Activated T-helper 2 cell treated with anti-CD3 and anti-CD28 coated beads, Interferon-gamma antibody, Interleukin-2, Interleukin-4, amounts not matched to agents 10 μg/mL and 5 μg/mL and 100 μg/mL, durations not matched to agents 14 hours and 24 hours and 36 hours (primary cell): ENCODE measurements at regions of chr20 and their contacts with region 1.

Region 1: GRCh38 chr20:407133-407952 is 756 bp upstream of the RBCK1 start:
- DNase-seq: peak; percentile 66
- H3K4me3 Mint-ChIP-seq: peak overlapping the region; percentile 86
- H3K27ac Mint-ChIP-seq: peak overlapping the region; percentile 89
- H3K4me1 Mint-ChIP-seq: peaks cover 40% of the 10 kb centered on the region
- H3K27me3 Mint-ChIP-seq: no peaks in the 10 kb centered on the region

Region 2: GRCh38 chr20:354298-355064 is 52.9 kb before region 1 on chr20:
- intact Hi-C with region 1: loop called (anchors 10 kb)
- DNase-seq: peak; percentile 74
- H3K4me3 Mint-ChIP-seq: no peak overlapping the region
- H3K27ac Mint-ChIP-seq: no peak overlapping the region
- H3K4me1 Mint-ChIP-seq: peaks cover 4% of the 10 kb centered on the region
- H3K27me3 Mint-ChIP-seq: no peaks in the 10 kb centered on the region

Region 3: GRCh38 chr20:381581-382290 is 25.6 kb before region 1 on chr20:
- intact Hi-C with region 1: loop called (anchors 1 kb)
- DNase-seq: peak; percentile 79
- H3K4me3 Mint-ChIP-seq: peak overlapping the region; percentile 78
- H3K27ac Mint-ChIP-seq: peak overlapping the region; percentile 78
- H3K4me1 Mint-ChIP-seq: peaks cover 23% of the 10 kb centered on the region
- H3K27me3 Mint-ChIP-seq: no peaks in the 10 kb centered on the region

Region 4: GRCh38 chr20:462199-462991 is 55.1 kb after region 1 on chr20 and contains the start of gene TBC1D20:
- intact Hi-C with region 1: loop called (anchors 5 kb)
- DNase-seq: peak; percentile 80
- H3K4me3 Mint-ChIP-seq: peak within 1 kb of the TSS; percentile 96
- H3K27ac Mint-ChIP-seq: peak within 1 kb of the TSS; percentile 89
- H3K4me1 Mint-ChIP-seq: peaks cover 42% of the 10 kb centered on the region
- H3K27me3 Mint-ChIP-seq: peaks cover 5% of the 10 kb centered on the region
- total RNA-seq, gene TBC1D20: 30.1 and 31.5 TPM in 2 replicates

Region 5: DNA sequence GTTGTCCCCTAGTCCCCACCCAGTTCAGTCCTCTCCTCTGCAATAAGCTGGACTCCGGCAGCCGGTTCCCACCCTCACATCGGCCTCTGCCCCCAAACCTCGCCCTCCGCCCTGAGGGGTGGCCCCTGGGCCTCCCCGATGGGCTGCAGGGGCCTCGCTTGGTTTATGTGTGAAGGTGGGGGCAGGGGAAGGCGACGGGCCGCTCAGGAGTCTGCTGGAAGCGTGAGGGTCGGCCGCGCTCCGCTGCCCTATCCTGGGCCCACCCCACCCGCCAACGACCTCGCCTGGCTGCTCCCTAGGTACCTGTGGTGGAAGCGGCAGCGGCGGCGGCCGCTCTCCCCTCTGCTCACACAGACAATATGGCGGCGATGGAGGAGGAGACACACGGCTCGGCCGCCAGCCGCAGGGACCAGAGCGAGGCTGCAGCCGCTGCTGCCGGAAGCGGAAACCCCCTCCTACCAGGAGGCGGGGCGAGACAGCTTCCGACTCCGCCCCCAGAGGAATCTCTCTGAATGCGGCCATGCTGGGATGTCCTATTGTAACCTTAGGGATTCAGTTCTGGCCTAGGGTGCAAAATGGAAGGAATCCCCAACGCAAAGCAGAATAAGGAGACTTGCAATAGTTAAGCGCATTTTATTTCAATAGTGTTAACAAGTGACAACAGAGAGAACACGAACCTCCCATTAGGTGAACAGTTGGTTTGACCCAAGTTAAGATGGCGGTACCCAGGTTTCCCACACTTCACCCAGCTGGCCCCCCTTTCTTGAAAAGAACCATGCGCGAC is 136.2 kb after region 1 on chr20 and contains the start of gene CSNK2A1:
- intact Hi-C with region 1: loop called (anchors 5 kb)
- DNase-seq: peak; percentile 94
- H3K4me3 Mint-ChIP-seq: peak within 1 kb of the TSS; percentile 92
- H3K27ac Mint-ChIP-seq: peak within 1 kb of the TSS; percentile 94
- H3K4me1 Mint-ChIP-seq: peaks cover 34% of the 10 kb centered on the region
- H3K27me3 Mint-ChIP-seq: peaks cover 11% of the 10 kb centered on the region
- total RNA-seq, gene CSNK2A1: 160 and 169 TPM in 2 replicates